ENCODE measurements at regions of chr21 and their contacts with region 1.

Region 1: DNA sequence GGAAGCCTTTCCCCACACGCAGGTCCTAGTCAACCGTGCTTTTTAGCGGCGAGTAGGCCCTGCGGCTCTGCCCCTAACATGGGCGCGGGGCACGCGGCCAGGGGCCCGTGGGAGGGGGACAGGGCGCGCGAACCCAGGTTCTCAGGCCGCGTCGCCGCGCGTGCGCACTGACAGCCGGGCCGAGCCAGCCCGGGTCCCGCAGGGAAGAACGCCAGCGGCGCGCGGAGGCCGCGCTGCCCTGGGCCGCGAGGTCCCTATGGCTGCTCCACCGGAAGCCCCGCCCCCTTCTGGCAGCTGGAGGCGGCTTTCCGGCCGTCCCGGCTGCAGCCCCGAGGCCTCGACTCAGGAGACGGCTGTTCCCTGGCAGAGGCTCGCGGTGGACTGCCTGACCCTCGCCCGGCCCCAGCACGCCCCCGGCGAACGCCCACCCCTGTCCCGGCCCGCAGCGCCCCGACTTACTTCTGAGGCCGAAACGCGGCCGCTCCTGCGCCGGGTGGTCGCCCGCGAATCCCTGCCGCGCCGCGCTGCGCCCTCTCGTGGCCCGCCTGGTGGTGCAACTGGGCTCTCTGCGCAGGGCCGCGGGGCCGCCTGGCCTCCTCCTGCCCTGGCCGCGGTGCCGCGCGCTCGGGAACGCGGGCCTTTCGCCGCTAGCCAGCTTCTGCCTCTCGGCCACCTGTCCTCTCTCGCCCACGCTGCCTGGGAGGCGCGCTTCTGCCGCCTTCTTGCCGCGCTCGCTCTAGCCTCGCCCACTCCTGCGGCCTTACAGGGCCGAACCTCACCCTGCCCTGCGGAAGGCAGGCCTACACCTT is 16.6 kb upstream of the RIPPLY3 start:
- DNase-seq: peak; percentile 63 to 95 (median 74)
- ATAC-seq: peak; percentile 90
- H3K4me3 ChIP-seq: peak overlapping the region; percentile 66
- H3K4me3 Mint-ChIP-seq: peak overlapping the region; percentile 83 to 95 (median 90)
- H3K27ac ChIP-seq: peak overlapping the region; percentile 69
- H3K27ac Mint-ChIP-seq: peak overlapping the region; percentile 71 to 94 (median 87)
- H3K4me1 ChIP-seq: peaks cover 0 to 4% of the 10 kb centered on the region in 2 donors
- H3K4me1 Mint-ChIP-seq: peaks cover 4 to 36% (median 28%) of the 10 kb centered on the region in 7 donors
- H3K27me3 ChIP-seq: no peaks in the 10 kb centered on the region
- H3K27me3 Mint-ChIP-seq: peaks cover 0 to 3% (median 0%) of the 10 kb centered on the region in 5 donors

Region 2: DNA sequence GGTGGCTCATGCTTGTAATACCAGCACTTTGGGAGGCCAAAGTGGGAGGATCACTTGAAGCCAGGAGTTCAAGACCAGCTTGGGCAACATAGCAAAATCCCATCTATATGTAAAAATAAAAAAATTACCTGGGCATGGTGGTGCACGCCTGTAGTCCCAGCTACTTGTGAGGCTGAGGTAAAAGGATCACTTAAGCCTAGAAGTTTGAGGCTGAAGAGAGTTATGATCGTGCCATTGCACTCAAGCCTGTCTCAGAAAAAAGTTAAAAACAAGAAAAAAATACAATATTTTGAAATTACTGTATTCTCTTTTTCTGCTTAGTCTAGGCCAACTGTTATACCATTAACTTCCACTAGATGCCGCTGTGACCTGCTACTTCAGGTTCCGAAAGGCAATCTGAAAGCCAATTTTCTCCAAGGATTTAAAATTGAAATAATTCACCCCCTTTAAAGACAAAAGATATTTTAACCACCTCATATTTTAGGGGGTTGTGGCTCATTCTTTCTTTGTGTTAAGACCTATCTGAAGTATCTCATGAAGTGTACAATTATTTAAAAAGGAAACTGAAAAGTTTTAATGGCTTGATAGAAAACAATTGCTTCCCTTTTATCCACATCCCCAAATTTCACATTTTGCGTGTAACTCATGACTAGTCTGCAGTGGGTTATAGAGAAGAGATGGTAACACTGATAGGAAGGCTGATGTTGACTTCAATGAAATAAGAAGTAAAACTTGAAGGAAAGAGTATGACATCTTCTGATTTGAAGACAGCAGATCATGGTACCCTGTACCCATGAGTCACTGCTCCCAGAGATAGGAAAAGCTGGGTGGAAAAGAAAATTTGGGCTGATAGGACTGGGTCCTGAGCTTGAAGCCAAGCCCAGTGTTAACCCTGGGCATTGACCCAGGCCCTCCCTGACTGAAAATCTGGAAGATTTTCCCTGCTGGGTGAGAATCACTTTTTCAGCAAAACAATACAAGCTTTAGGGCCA is 485.5 kb before region 1 on chr21:
- CTCF ChIA-PET with region 1: interaction called, 3 read pairs
- POLR2A ChIA-PET with region 1: no interaction called
- intact Hi-C with region 1: loop called in 1 of 2 experiments (anchors 1 kb)
- DNase-seq: peak in 7 of 9 donors; percentile 8 to 56 (median 40)
- ATAC-seq: peak; percentile 46
- H3K4me3 ChIP-seq: no peak overlapping the region
- H3K4me3 Mint-ChIP-seq: no peak overlapping the region
- H3K27ac ChIP-seq: no peak overlapping the region
- H3K27ac Mint-ChIP-seq: no peak overlapping the region
- H3K4me1 ChIP-seq: no peaks in the 10 kb centered on the region
- H3K4me1 Mint-ChIP-seq: no peaks in the 10 kb centered on the region
- H3K27me3 ChIP-seq: no peaks in the 10 kb centered on the region
- H3K27me3 Mint-ChIP-seq: peaks cover 0 to 17% (median 10%) of the 10 kb centered on the region in 5 donors

Region 3: GRCh38 chr21:36934864-36935420 is 55.0 kb before region 1 on chr21:
- CTCF ChIA-PET with region 1: interaction called, 3 read pairs
- POLR2A ChIA-PET with region 1: no interaction called
- intact Hi-C with region 1: loop called (anchors 1 kb)
- DNase-seq: no peak
- ATAC-seq: no peak
- H3K4me3 ChIP-seq: no peak overlapping the region
- H3K4me3 Mint-ChIP-seq: no peak overlapping the region
- H3K27ac ChIP-seq: no peak overlapping the region
- H3K27ac Mint-ChIP-seq: no peak overlapping the region
- H3K4me1 ChIP-seq: no peaks in the 10 kb centered on the region
- H3K4me1 Mint-ChIP-seq: peaks cover 0 to 5% (median 0%) of the 10 kb centered on the region in 7 donors
- H3K27me3 ChIP-seq: no peaks in the 10 kb centered on the region
- H3K27me3 Mint-ChIP-seq: no peaks in the 10 kb centered on the region

Region 4: GRCh38 chr21:36966066-36966820 is 23.7 kb before region 1 on chr21 and contains the start of gene HLCS:
- CTCF ChIA-PET with region 1: interaction called, 25 read pairs
- POLR2A ChIA-PET with region 1: interaction called, 24 read pairs
- intact Hi-C with region 1: loop called (anchors 1 kb)
- DNase-seq: peak; percentile 62 to 79 (median 72)
- ATAC-seq: peak; percentile 93
- H3K4me3 ChIP-seq: peak within 1 kb of the TSS; percentile 52
- H3K4me3 Mint-ChIP-seq: peak within 1 kb of the TSS; percentile 80 to 91 (median 85)
- H3K27ac ChIP-seq: peak within 1 kb of the TSS; percentile 75
- H3K27ac Mint-ChIP-seq: peak within 1 kb of the TSS; percentile 77 to 92 (median 91)
- H3K4me1 ChIP-seq: peaks cover 0 to 6% of the 10 kb centered on the region in 2 donors
- H3K4me1 Mint-ChIP-seq: peaks cover 8 to 25% (median 12%) of the 10 kb centered on the region in 7 donors
- H3K27me3 ChIP-seq: no peaks in the 10 kb centered on the region
- H3K27me3 Mint-ChIP-seq: no peaks in the 10 kb centered on the region
- total RNA-seq, gene HLCS: 8.8 to 19.3 (median 12.2) TPM

Region 5: GRCh38 chr21:36976882-36977651 is 12.8 kb before region 1 on chr21:
- CTCF ChIA-PET with region 1: interaction called, 10 read pairs
- POLR2A ChIA-PET with region 1: no interaction called
- intact Hi-C with region 1: loop called (anchors 1 kb)
- DNase-seq: peak in 4 of 9 donors; percentile 18 to 34 (median 31)
- ATAC-seq: peak; percentile 69
- H3K4me3 ChIP-seq: no peak overlapping the region
- H3K4me3 Mint-ChIP-seq: peak overlapping the region in 1 of 10 donors; percentile 11
- H3K27ac ChIP-seq: no peak overlapping the region
- H3K27ac Mint-ChIP-seq: peak overlapping the region in 1 of 9 donors; percentile 22
- H3K4me1 ChIP-seq: peaks cover 0 to 9% of the 10 kb centered on the region in 2 donors
- H3K4me1 Mint-ChIP-seq: peaks cover 11 to 23% (median 14%) of the 10 kb centered on the region in 7 donors
- H3K27me3 ChIP-seq: no peaks in the 10 kb centered on the region
- H3K27me3 Mint-ChIP-seq: peaks cover 0 to 15% (median 0%) of the 10 kb centered on the region in 5 donors

Region 6: DNA sequence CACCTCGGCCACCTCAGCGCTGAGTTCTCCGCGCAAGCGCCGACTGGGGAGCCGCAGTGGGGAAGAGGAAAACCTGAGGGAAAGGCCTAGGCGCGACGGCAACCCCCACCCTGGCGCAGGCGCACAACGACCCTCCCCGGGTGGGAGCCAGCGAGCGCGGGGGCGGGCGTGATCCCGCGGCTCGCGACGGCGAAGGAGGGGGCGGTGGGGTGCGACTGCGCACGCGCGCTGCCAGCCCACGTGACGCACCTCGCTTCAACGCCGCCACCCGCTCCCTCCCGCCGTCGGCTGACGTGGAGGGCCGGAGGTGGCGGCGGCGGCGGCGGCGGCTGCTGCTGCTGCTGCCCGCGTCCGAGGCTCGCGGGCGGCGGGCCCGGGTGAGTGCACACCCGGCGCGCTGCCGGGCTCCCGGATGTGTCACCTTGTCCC is 83.1 kb after region 1 on chr21 and contains the starts of genes PIGP and TTC3:
- CTCF ChIA-PET with region 1: no interaction called
- POLR2A ChIA-PET with region 1: interaction called, 3 read pairs
- intact Hi-C with region 1: loop called (anchors 1 kb)
- DNase-seq: peak; percentile 93 to 99 (median 97)
- ATAC-seq: peak; percentile 79
- H3K4me3 ChIP-seq: peak within 1 kb of the TSS; percentile 76
- H3K4me3 Mint-ChIP-seq: peak within 1 kb of the TSS; percentile 88 to 100 (median 98)
- H3K27ac ChIP-seq: peak within 1 kb of the TSS; percentile 97
- H3K27ac Mint-ChIP-seq: peak within 1 kb of the TSS; percentile 91 to 100 (median 97)
- H3K4me1 ChIP-seq: peaks cover 22 to 23% of the 10 kb centered on the region in 2 donors
- H3K4me1 Mint-ChIP-seq: peaks cover 30 to 66% (median 59%) of the 10 kb centered on the region in 7 donors
- H3K27me3 ChIP-seq: no peaks in the 10 kb centered on the region
- H3K27me3 Mint-ChIP-seq: peaks cover 0 to 6% (median 0%) of the 10 kb centered on the region in 5 donors
- total RNA-seq, gene PIGP: 9.1 to 26.7 (median 15.3) TPM
- total RNA-seq, gene TTC3: 66.6 to 208 (median 154) TPM

Measured in naive thymus-derived CD4-positive, alpha-beta T cell (primary cell).